SK-N-SH (cell line): ENCODE measurements at regions of chr16 and their contacts with region 1.

Region 1: DNA sequence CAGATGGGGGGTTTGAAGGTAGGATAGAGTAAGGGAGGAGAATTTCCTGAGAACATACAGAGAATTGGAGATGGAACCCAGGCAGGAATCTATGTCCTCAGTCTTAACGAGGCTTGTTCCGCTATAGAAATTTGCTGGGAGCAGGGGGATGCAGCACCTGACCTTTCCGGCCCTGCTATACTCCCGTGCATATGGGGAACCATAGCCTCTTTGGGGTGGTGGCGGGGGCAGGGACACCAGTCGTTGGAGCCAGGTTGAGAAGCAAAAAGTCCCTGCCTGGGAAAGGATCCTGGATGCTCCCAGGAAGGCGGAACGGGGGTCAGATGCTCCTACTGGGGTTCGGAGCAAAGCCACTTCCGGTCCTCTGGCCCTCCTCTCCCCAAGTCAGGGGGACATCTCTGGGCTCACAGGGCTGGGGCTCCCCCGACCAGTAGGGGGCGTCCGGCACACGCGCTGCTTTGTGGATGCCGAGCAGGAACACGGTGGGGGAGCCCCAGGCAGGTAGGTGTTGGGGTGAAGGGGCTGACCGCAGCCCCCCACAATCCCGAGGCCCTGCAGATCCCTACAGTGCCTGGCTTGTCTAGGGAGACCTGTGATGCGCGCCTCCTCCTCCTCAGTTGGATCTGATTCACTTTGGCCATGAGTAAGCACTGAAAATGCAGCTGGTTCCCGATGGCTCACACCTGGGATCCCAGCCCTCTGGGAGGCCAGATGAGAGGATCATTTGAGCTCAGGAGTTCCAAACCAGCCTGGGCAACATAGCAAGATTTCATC is 15.5 kb upstream of the TFAP4 start:
- DNase-seq: peak; percentile 91
- H3K4me3 ChIP-seq: no peak overlapping the region
- H3K27ac ChIP-seq: no peak overlapping the region
- H3K4me1 ChIP-seq: peaks cover 0 to 10% of the 10 kb centered on the region in 2 experiments; a peak in 1 of 4 replicates
- H3K27me3 ChIP-seq: no peaks in the 10 kb centered on the region
- CTCF ChIP-seq: peak; percentile 95
- EP300 ChIP-seq: no peak
- RAD21 ChIP-seq: peak; percentile 83

Region 2: GRCh38 chr16:4193920-4194319 is 94.4 kb before region 1 on chr16:
- CTCF ChIA-PET with region 1: no interaction called
- POLR2A ChIA-PET with region 1: no interaction called
- DNase-seq: no peak
- H3K4me3 ChIP-seq: no peak overlapping the region
- H3K27ac ChIP-seq: no peak overlapping the region
- H3K4me1 ChIP-seq: no peaks in the 10 kb centered on the region
- H3K27me3 ChIP-seq: no peaks in the 10 kb centered on the region
- CTCF ChIP-seq: no peak
- EP300 ChIP-seq: no peak
- RAD21 ChIP-seq: no peak

Region 3: DNA sequence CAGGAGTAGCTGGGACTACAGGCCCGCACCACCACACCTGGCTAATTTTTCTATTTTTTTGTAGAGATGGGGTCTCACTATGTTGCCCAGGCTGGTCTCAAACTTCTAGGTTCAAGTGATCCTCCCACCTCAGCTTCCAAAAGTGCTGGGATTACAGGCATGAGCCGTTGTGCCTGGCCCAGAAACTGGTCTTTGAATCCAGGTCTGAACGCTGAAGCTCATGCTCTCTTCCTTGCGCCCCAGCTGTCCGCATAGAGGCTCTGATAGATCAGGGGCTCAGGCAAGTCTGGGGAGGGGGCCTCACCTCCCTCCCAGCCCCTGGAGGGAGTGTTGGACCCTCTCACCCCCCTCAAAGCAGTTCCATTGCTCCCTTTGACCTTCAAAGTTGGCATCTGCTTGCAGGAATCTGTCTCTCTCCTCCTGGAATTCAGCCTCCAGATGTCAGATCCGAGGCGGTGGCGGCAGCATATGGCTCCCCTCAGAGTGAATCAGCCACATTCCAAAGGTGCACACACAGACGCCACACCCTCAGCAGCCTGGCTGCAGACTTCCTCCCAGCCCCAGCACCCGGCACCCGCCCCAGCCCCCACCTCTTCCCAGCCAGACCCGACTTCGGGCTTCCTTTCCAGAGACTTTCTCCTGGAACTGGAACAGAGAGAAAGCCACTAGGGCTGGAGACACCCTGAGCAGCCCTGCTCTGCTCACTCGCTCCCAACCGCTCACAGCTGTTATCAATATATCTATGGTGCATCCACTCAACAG is 10.6 kb after region 1 on chr16:
- CTCF ChIA-PET with region 1: interaction called, 19 read pairs
- POLR2A ChIA-PET with region 1: interaction called, 4 read pairs
- DNase-seq: peak; percentile 53
- H3K4me3 ChIP-seq: 0 out of 4 replicates have a peak overlapping the region, but pooled peaks of 1 of the 2 experiments have one; percentile 11
- H3K27ac ChIP-seq: peak overlapping the region; percentile 65 to 86; a peak in 3 of 4 replicates
- H3K4me1 ChIP-seq: peaks cover 9 to 16% of the 10 kb centered on the region in 2 experiments; a peak in 3 of 4 replicates
- H3K27me3 ChIP-seq: no peaks in the 10 kb centered on the region
- CTCF ChIP-seq: no peak
- EP300 ChIP-seq: peak in 1 of 2 experiments; percentile 61; a peak in 1 of 4 replicates
- RAD21 ChIP-seq: no peak

Region 4: DNA sequence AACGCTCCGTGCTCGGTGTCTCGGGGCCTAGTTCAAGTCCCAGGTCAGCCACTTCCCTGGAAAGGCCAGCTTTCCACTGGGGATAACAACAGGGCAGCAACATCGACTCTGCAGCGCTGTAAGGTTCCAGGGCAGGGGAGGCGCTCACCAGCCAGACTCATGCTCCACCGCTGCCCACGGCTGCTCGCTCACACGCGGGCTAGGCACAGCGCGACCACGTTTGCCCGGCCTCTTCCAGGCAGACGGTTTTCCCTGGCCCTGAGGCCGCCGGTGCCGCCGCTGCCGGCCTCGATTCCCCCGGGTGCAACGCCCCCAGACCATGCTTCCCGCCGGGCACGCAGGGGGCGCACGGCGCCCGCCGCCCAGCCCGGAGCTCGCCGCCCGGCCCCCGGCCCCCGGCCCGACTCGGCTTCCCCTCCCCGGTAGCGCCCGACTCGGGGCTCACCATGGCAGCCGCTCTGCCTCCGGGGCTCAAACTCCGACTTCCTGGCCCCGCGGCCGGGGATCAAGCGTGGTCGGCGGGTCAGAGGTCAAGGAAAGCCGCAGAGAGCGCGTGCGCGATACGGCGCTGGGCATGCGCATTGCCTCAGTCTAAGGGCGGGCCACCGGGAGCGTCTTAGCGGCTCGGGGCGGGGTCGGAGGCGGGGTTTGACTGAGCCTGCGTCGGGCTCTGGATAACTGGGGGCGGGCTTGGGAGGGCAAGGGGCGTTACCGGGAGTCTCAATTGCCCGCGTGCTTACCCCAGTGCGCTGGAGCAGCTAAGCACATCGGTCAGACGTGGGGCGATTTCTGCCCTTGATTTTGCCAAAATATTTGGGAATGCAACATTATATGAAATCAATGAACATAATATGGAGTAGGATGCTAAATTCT is 62.7 kb after region 1 on chr16 and contains the start of gene PAM16:
- CTCF ChIA-PET with region 1: interaction called, 10 read pairs
- POLR2A ChIA-PET with region 1: no interaction called
- DNase-seq: peak; percentile 99
- H3K4me3 ChIP-seq: peak within 1 kb of the TSS; percentile 67 to 85
- H3K27ac ChIP-seq: peak within 1 kb of the TSS; percentile 59 to 83
- H3K4me1 ChIP-seq: peaks cover 3 to 10% of the 10 kb centered on the region in 2 experiments; a peak in 3 of 4 replicates
- H3K27me3 ChIP-seq: no peaks in the 10 kb centered on the region
- CTCF ChIP-seq: 0 out of 2 replicates have a peak, but pooled peaks have one; percentile 20
- EP300 ChIP-seq: no peak
- RAD21 ChIP-seq: no peak
- polyA plus RNA-seq, gene PAM16: 96.3 and 96.4 TPM in 2 replicates